Mammary epithelial cell (primary cell): ENCODE measurements at regions of chr19 and their contacts with region 1.

Region 1: GRCh38 chr19:46254776-46255175 is 25.2 kb downstream of the IGFL1 start:
- DNase-seq: peak; percentile 73
- H3K4me3 ChIP-seq: no peak overlapping the region
- H3K27ac ChIP-seq: no peak overlapping the region
- H3K4me1 ChIP-seq: no peaks in the 10 kb centered on the region
- H3K27me3 ChIP-seq: peaks cover 8% of the 10 kb centered on the region
- CTCF ChIP-seq: no peak

Region 2: GRCh38 chr19:46173886-46174507 is 80.8 kb before region 1 on chr19:
- CTCF ChIA-PET with region 1: no interaction called
- dilution Hi-C with region 1: loop called (anchors 5 kb)
- in situ Hi-C with region 1: no loop called
- intact Hi-C with region 1: no loop called
- DNase-seq: no peak
- H3K4me3 ChIP-seq: no peak overlapping the region
- H3K27ac ChIP-seq: no peak overlapping the region
- H3K4me1 ChIP-seq: no peaks in the 10 kb centered on the region
- H3K27me3 ChIP-seq: no peaks in the 10 kb centered on the region
- CTCF ChIP-seq: peak in 1 of 2 donors; percentile 0

Region 3: DNA sequence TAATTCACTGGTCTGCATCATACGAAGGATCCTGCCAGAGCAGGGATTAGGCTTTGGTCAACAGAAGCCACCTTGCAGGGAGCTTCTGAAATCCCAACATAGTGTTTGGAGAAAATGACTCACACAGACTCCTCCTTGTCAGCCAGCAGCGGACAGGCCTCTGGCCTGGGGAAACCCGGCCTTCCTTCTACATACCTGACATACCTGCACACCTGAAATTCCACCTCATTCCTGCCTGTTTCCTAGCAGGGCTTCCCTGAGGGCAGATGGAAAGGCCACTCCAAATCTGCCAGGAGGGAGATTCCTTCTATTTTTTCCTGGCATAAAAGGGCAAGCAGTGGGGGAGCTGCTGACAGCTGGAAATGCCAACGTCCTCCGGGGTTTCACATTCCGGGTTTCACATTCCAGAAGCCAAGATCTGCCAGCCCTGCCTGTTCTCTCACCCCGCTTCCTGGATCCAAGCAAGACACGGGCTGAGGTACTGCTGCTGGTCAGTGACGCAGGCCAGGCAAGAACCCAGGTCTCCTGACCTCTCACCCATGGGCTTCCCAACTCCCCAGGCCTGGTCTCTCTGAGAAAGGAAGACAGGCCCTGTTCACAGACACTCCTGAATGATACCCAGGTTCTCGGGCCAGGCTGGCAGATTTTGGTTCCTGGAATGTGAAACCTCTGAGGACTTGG is 43.4 kb before region 1 on chr19:
- CTCF ChIA-PET with region 1: no interaction called
- dilution Hi-C with region 1: loop called (anchors 5 kb)
- in situ Hi-C with region 1: no loop called
- intact Hi-C with region 1: no loop called
- DNase-seq: peak; percentile 89
- H3K4me3 ChIP-seq: no peak overlapping the region
- H3K27ac ChIP-seq: peak overlapping the region; percentile 58
- H3K4me1 ChIP-seq: peaks cover 58% of the 10 kb centered on the region
- H3K27me3 ChIP-seq: no peaks in the 10 kb centered on the region
- CTCF ChIP-seq: no peak